ENCODE measurements at regions of chr2 and their contacts with region 1.

Region 1: DNA sequence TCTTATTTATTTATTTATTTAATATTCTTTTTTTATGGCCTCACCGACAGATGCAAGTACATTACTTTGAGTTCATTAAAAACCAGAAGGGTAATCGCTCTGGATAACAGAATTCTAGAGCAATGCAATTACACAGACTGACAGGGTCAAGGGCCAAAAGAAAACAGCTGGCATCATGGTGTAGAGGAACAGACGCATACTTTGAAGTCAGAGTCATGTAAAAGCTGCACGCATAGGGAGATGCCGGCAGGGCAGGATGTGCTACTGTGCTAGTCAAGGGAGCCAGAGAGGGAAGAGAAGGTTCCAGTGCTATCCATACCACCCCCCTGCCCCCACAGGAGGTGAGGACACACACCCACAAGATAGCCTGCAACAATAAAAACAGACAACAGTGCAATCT is 115.2 kb upstream of the TFCP2L1 start:
- DNase-seq: no peak
- ATAC-seq: no peak
- H3K4me3 Mint-ChIP-seq: no peak overlapping the region
- H3K27ac Mint-ChIP-seq: no peak overlapping the region
- H3K4me1 Mint-ChIP-seq: no peaks in the 10 kb centered on the region
- H3K27me3 Mint-ChIP-seq: no peaks in the 10 kb centered on the region
- CTCF ChIP-seq: no peak

Region 2: DNA sequence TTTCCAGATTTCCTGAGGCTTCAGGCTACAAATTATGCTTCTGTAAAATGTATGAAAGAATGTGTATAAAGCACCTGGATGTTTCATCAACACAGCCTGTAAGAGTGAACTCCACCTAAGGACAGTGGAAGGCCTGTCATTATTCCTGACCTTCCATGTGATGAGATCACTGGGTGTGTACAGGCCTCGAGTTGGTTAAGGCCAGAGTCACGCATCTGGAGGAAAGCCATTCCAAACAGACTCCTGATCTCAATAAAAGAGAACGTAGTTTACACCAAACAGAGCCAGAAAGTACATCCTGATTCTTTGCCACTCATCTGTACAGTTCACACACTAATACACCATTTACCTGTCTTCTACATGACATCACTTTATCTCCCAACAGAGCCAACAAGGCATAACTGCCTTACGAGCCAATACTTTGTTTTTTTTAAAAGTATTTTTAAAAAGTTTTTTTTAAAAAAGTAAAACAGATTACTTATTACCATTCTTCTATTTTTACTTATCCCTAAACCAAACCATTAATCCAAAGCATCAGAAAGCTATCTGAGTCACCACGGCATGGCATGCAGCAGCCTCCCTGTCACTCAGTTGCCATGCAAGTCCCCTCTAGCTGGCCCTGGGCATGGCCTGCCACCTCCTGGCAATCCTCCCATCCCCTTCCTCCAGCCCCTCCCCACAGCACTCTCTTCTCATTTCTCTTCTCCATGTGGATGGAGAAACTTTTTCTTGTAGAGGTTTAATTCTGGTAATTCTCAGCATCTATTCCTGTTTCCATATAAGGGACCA is 36.4 kb before region 1 on chr2:
- CTCF ChIA-PET with region 1: no interaction called
- POLR2A ChIA-PET with region 1: no interaction called
- DNase-seq: no peak
- ATAC-seq: no peak
- H3K4me3 Mint-ChIP-seq: no peak overlapping the region
- H3K27ac Mint-ChIP-seq: no peak overlapping the region
- H3K4me1 Mint-ChIP-seq: no peaks in the 10 kb centered on the region
- H3K27me3 Mint-ChIP-seq: no peaks in the 10 kb centered on the region
- CTCF ChIP-seq: no peak

Region 3: DNA sequence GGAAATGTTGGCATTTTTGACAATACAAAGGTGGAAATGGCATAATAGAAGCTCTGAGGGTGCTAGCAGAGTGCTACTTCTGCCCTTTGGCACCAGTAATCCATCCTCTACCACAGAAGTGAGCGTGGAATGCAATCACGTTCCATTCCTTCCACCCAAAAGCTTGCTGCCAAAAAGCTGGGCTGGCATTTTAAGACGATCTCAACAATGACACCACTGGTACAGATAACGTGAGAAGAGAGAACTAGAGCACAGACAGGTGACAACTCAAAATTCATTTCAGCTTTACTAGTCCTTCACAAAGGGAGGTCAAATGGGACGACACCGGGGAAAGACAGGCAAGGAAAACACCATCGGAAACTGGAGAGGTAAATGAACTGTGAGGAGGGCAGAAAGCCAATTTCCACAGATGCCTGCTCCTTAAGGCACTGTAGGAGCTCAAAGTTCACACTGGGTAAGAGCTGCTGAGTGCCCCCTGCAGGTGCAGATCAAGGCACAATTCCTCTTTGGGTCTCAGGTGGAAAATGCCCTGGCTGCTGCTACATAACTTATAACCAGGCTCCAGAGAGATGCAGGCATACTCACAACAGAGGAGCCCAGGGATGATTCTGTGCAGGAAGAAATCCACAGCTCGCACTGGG is 79.8 kb after region 1 on chr2:
- CTCF ChIA-PET with region 1: interaction called, 12 read pairs
- POLR2A ChIA-PET with region 1: no interaction called
- DNase-seq: peak; percentile 61
- ATAC-seq: peak; percentile 91
- H3K4me3 Mint-ChIP-seq: no peak overlapping the region
- H3K27ac Mint-ChIP-seq: peak overlapping the region; percentile 95
- H3K4me1 Mint-ChIP-seq: peaks cover 41% of the 10 kb centered on the region
- H3K27me3 Mint-ChIP-seq: no peaks in the 10 kb centered on the region
- CTCF ChIP-seq: no peak

Region 4: DNA sequence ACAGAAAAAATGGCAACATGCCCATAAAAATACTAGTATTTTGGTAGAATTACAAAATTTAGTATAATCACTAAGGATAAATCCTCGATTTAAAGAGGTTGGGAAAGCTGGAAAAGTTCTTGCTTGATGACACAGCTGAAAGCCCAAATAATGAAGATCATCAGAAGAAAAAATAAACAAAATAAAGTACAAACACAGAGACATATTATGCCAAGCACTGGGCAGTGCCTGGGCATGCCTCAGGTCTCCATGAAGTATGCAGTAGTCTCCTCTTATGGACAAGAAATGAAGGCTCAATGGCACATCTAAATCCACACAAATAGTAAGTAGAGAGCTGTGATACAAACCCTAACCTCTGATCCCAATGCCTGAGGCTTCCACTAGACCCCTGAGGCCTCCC is 188.2 kb after region 1 on chr2:
- CTCF ChIA-PET with region 1: no interaction called
- POLR2A ChIA-PET with region 1: no interaction called
- DNase-seq: no peak
- ATAC-seq: no peak
- H3K4me3 Mint-ChIP-seq: no peak overlapping the region
- H3K27ac Mint-ChIP-seq: peak overlapping the region; percentile 34; the same call in 1 of the 2 replicates
- H3K4me1 Mint-ChIP-seq: peaks cover 10% of the 10 kb centered on the region
- H3K27me3 Mint-ChIP-seq: no peaks in the 10 kb centered on the region
- CTCF ChIP-seq: no peak

Region 5: GRCh38 chr2:121722479-121722878 is 322.3 kb after region 1 on chr2:
- CTCF ChIA-PET with region 1: interaction called, 14 read pairs
- POLR2A ChIA-PET with region 1: no interaction called
- DNase-seq: no peak
- ATAC-seq: no peak
- H3K4me3 Mint-ChIP-seq: no peak overlapping the region
- H3K27ac Mint-ChIP-seq: no peak overlapping the region
- H3K4me1 Mint-ChIP-seq: no peaks in the 10 kb centered on the region
- H3K27me3 Mint-ChIP-seq: no peaks in the 10 kb centered on the region
- CTCF ChIP-seq: no peak

Measured in WTC11 (cell line).